Naive thymus-derived CD4-positive, alpha-beta T cell (primary cell): ENCODE measurements at regions of chr1 and their contacts with region 1.

Region 1: GRCh38 chr1:52056163-52056936 is at the start of gene BTF3L4:
- DNase-seq: peak; percentile 74 to 94 (median 90)
- ATAC-seq: peak; percentile 97
- H3K4me3 ChIP-seq: peak within 1 kb of the TSS; percentile 92
- H3K4me3 Mint-ChIP-seq: peak within 1 kb of the TSS; percentile 93 to 100 (median 98)
- H3K27ac ChIP-seq: peak within 1 kb of the TSS; percentile 87
- H3K27ac Mint-ChIP-seq: peak within 1 kb of the TSS; percentile 91 to 99 (median 96)
- H3K4me1 ChIP-seq: peaks cover 19 to 24% of the 10 kb centered on the region in 2 donors
- H3K4me1 Mint-ChIP-seq: peaks cover 39 to 79% (median 65%) of the 10 kb centered on the region in 7 donors
- H3K27me3 ChIP-seq: no peaks in the 10 kb centered on the region
- H3K27me3 Mint-ChIP-seq: no peaks in the 10 kb centered on the region
- total RNA-seq, gene BTF3L4: 30.4 to 41.2 (median 35.8) TPM

Region 2: GRCh38 chr1:51519048-51519864 is 537.1 kb before region 1 on chr1 and contains the start of gene EPS15:
- CTCF ChIA-PET with region 1: no interaction called
- POLR2A ChIA-PET with region 1: no interaction called
- intact Hi-C with region 1: loop called (anchors 1 to 5 kb)
- DNase-seq: peak; percentile 62 to 90 (median 77)
- ATAC-seq: peak; percentile 86
- H3K4me3 ChIP-seq: peak within 1 kb of the TSS; percentile 87
- H3K4me3 Mint-ChIP-seq: peak within 1 kb of the TSS; percentile 89 to 97 (median 94)
- H3K27ac ChIP-seq: peak within 1 kb of the TSS; percentile 66
- H3K27ac Mint-ChIP-seq: peak within 1 kb of the TSS; percentile 86 to 95 (median 90)
- H3K4me1 ChIP-seq: peaks cover 31 to 34% of the 10 kb centered on the region in 2 donors
- H3K4me1 Mint-ChIP-seq: peaks cover 46 to 58% (median 55%) of the 10 kb centered on the region in 7 donors
- H3K27me3 ChIP-seq: no peaks in the 10 kb centered on the region
- H3K27me3 Mint-ChIP-seq: no peaks in the 10 kb centered on the region
- total RNA-seq, gene EPS15: 44.8 to 79.9 (median 53.5) TPM

Region 3: DNA sequence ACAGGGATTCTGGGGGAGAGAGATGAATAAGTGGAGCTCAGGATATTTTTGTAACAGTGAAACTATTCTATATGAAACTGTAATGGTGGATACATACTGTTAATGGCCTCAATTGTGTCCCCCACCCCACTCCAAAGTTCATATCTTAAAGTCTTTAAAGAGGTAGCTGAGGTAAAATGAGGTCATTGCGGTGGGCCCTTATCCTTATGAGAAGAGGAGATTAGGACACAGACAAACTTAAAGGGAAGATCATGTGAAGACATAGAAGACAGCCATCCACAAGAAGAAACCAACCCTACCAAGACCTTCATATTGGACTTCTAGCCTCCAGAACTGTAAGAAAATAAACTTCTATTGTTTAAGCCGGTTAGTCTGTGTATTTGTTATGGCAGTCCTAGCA is 11.1 kb before region 1 on chr1:
- CTCF ChIA-PET with region 1: interaction called, 3 read pairs
- POLR2A ChIA-PET with region 1: interaction called, 10 read pairs
- intact Hi-C with region 1: no loop called
- DNase-seq: no peak
- ATAC-seq: no peak
- H3K4me3 ChIP-seq: no peak overlapping the region
- H3K4me3 Mint-ChIP-seq: no peak overlapping the region
- H3K27ac ChIP-seq: no peak overlapping the region
- H3K27ac Mint-ChIP-seq: peak overlapping the region in 1 of 9 donors; percentile 42
- H3K4me1 ChIP-seq: no peaks in the 10 kb centered on the region
- H3K4me1 Mint-ChIP-seq: peaks cover 12 to 32% (median 28%) of the 10 kb centered on the region in 7 donors
- H3K27me3 ChIP-seq: no peaks in the 10 kb centered on the region
- H3K27me3 Mint-ChIP-seq: no peaks in the 10 kb centered on the region

Region 4: DNA sequence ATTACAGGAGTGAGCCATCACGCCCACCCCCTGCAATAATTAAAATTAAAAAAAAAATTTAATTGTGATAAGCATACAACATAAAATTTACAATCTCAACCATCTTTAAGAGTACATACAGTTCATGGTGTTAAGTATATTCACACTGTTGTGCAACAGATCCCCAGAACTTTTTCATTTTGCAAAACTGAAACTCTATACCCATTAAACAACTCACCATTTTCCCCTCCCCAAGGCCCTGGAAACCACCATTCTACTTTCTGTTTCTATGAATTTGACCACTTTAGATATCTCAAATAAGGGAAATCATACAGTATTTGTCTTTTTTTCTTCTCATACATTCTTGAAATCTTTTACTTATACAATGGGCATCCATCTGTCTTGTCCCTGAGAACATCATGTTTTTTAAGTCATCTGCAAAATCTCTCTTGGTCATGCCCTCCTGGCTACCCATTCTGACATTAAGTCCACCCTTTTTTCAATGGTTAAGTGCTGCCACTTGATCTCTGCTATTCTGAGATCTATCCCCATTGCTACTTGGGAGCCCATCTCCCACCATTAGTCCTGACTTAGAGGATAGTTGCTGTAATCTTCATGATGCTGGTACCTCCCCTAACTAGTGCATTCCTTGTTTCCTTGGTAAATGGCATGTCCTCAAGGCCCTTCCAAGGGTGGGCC is 46.1 kb after region 1 on chr1:
- CTCF ChIA-PET with region 1: no interaction called
- POLR2A ChIA-PET with region 1: no interaction called
- intact Hi-C with region 1: no loop called
- DNase-seq: no peak
- ATAC-seq: no peak
- H3K4me3 ChIP-seq: no peak overlapping the region
- H3K4me3 Mint-ChIP-seq: peak overlapping the region in 1 of 10 donors; percentile 2
- H3K27ac ChIP-seq: no peak overlapping the region
- H3K27ac Mint-ChIP-seq: no peak overlapping the region
- H3K4me1 ChIP-seq: no peaks in the 10 kb centered on the region
- H3K4me1 Mint-ChIP-seq: peaks cover 0 to 7% (median 0%) of the 10 kb centered on the region in 7 donors
- H3K27me3 ChIP-seq: no peaks in the 10 kb centered on the region
- H3K27me3 Mint-ChIP-seq: no peaks in the 10 kb centered on the region

Region 5: DNA sequence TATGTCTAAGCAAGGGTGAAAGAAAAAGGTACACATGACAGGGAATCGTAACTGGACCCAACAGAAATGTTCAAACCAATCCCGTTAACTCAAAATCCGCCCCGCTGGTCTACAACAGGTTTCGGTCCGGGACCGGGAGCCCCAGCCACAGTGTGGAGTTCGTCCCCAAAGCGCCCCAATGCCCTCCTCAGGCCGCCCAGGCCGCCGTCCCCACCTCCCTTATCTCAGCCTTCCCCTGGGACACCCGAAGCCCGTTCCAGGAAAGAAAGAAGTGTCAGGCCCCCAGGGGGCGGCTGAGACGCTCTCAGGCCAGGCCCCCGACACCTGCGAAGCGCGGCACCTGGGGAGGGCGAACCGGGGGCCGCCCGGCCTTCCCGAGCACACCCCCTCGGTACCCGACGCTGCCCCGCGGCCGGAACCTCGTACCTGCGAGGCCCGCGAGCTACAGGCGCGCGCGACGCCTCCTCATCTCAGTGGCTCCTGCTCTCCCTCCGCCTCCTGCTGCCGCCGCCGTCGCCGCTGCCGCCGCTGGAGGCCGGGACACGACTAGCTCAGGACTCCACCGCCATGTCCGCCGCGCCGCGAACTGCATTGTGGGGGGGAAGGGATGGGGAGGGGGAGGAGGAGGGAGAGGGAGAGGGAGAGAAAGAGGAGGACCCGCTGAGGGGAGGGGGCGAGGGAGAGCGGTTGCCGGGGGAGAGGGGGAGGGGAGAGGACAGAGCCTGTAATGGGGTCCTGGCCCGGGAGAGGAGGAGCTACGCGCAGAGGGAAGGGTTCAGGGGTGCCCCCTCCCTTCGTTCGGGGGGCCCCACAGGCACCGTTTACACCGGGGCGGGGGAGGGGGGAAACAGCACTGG is 496.4 kb after region 1 on chr1 and contains the start of gene TUT4:
- CTCF ChIA-PET with region 1: no interaction called
- POLR2A ChIA-PET with region 1: no interaction called
- intact Hi-C with region 1: loop called (anchors 2 to 10 kb)
- DNase-seq: peak; percentile 57 to 77 (median 73)
- ATAC-seq: peak; percentile 57
- H3K4me3 ChIP-seq: peak within 1 kb of the TSS; percentile 95
- H3K4me3 Mint-ChIP-seq: peak within 1 kb of the TSS in 8 of 10 donors; percentile 67 to 88 (median 75)
- H3K27ac ChIP-seq: peak within 1 kb of the TSS; percentile 91
- H3K27ac Mint-ChIP-seq: peak within 1 kb of the TSS in 7 of 9 donors; percentile 55 to 94 (median 87)
- H3K4me1 ChIP-seq: peaks cover 0 to 40% of the 10 kb centered on the region in 2 donors
- H3K4me1 Mint-ChIP-seq: peaks cover 23 to 52% (median 43%) of the 10 kb centered on the region in 7 donors
- H3K27me3 ChIP-seq: no peaks in the 10 kb centered on the region
- H3K27me3 Mint-ChIP-seq: peaks cover 0 to 7% (median 0%) of the 10 kb centered on the region in 5 donors
- total RNA-seq, gene TUT4: 80.4 to 169 (median 139) TPM

Region 6: GRCh38 chr1:53220171-53220961 is 1164.0 kb after region 1 on chr1 and contains the start of gene CZIB:
- CTCF ChIA-PET with region 1: no interaction called
- POLR2A ChIA-PET with region 1: no interaction called
- intact Hi-C with region 1: loop called (anchors 5 to 10 kb)
- DNase-seq: peak; percentile 85 to 97 (median 92)
- ATAC-seq: peak; percentile 97
- H3K4me3 ChIP-seq: peak within 1 kb of the TSS; percentile 80
- H3K4me3 Mint-ChIP-seq: peak within 1 kb of the TSS; percentile 83 to 94 (median 92)
- H3K27ac ChIP-seq: peak within 1 kb of the TSS; percentile 99
- H3K27ac Mint-ChIP-seq: peak within 1 kb of the TSS; percentile 91 to 98 (median 96)
- H3K4me1 ChIP-seq: peaks cover 15% of the 10 kb centered on the region in 2 donors
- H3K4me1 Mint-ChIP-seq: peaks cover 15 to 31% (median 26%) of the 10 kb centered on the region in 7 donors
- H3K27me3 ChIP-seq: no peaks in the 10 kb centered on the region
- H3K27me3 Mint-ChIP-seq: no peaks in the 10 kb centered on the region
- total RNA-seq, gene CZIB: 41.9 to 94.9 (median 51.4) TPM

Region 7: GRCh38 chr1:53945433-53946251 is 1889.3 kb after region 1 on chr1 and contains the start of gene IFT25:
- CTCF ChIA-PET with region 1: no interaction called
- POLR2A ChIA-PET with region 1: no interaction called
- intact Hi-C with region 1: loop called (anchors 2 to 5 kb)
- DNase-seq: peak; percentile 96 to 100 (median 99)
- ATAC-seq: peak; percentile 92
- H3K4me3 ChIP-seq: peak within 1 kb of the TSS; percentile 70
- H3K4me3 Mint-ChIP-seq: peak within 1 kb of the TSS; percentile 91 to 97 (median 96)
- H3K27ac ChIP-seq: peak within 1 kb of the TSS; percentile 83
- H3K27ac Mint-ChIP-seq: peak within 1 kb of the TSS; percentile 83 to 96 (median 93)
- H3K4me1 ChIP-seq: peaks cover 17 to 30% of the 10 kb centered on the region in 2 donors
- H3K4me1 Mint-ChIP-seq: peaks cover 33 to 64% (median 56%) of the 10 kb centered on the region in 7 donors
- H3K27me3 ChIP-seq: no peaks in the 10 kb centered on the region
- H3K27me3 Mint-ChIP-seq: no peaks in the 10 kb centered on the region
- total RNA-seq, gene IFT25: 17.5 to 59.9 (median 41.3) TPM